CD8-positive, alpha-beta T cell (primary cell): ENCODE measurements at regions of chr15 and their contacts with region 1.

Region 1: DNA sequence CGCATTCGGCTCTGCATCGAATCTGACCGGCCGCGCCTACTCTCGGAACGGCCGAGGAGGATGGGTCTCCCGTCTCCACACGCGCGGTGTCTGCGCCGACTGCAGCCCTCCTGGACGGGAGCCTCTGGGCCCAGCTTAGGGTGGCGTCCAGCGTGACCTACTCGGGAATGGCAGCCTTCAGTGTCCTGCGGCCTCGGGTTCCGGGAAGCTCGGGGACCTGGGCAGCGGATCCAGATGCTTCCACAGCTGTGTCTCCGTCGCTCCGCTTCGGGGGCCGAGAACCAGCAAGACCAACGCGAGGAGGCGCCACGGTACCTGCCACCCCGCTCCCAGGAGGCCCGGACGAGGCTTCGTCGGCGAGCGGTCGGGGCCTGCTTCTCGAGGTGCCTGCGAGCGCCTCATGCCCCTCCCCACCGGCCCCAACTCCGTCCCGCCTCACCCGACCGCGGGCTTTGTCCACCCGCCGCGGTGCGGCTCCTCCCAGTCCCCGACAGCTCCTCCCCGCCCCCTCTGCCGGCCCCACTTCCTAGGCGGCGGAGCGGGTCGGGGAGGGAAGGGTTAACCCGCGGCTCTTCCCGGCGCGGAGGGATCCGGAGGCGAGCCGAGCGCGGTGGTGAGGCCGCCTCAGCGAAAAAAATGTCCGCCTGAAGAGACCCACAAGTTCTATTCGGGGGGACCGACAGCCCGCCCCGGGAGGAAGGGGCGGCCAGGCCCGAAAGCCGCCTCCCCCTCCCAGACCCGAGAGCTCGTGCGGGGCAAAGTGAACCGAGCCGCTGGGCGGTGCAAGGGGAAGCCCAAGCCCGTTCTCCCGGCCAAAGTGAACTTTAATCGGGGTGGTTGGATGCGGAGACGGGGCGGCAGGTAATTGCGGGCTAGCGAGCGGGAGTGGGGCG is at the start of gene TCF12:
- DNase-seq: peak; percentile 76 to 96 (median 88)
- ATAC-seq: peak; percentile 70
- H3K4me3 ChIP-seq: peak within 1 kb of the TSS; percentile 89 to 96
- H3K4me3 Mint-ChIP-seq: peak within 1 kb of the TSS; percentile 88
- H3K27ac ChIP-seq: peak within 1 kb of the TSS; percentile 64 to 84
- H3K27ac Mint-ChIP-seq: peak within 1 kb of the TSS; percentile 93
- H3K4me1 ChIP-seq: peaks cover 25% of the 10 kb centered on the region
- H3K4me1 Mint-ChIP-seq: peaks cover 46% of the 10 kb centered on the region
- H3K27me3 ChIP-seq: no peaks in the 10 kb centered on the region
- H3K27me3 Mint-ChIP-seq: no peaks in the 10 kb centered on the region
- CTCF ChIP-seq: peak; percentile 50
- total RNA-seq, gene TCF12: 45.0 to 47.2 TPM

Region 2: GRCh38 chr15:56886932-56887781 is 31.1 kb before region 1 on chr15:
- CTCF ChIA-PET with region 1: interaction called, 5 read pairs
- POLR2A ChIA-PET with region 1: interaction called, 34 read pairs
- intact Hi-C with region 1: loop called (anchors 1 kb)
- DNase-seq: peak; percentile 52 to 94 (median 77)
- ATAC-seq: peak; percentile 85
- H3K4me3 ChIP-seq: peak overlapping the region; percentile 77
- H3K4me3 Mint-ChIP-seq: peak overlapping the region; percentile 86
- H3K27ac ChIP-seq: peak overlapping the region; percentile 68 to 92
- H3K27ac Mint-ChIP-seq: peak overlapping the region; percentile 86
- H3K4me1 ChIP-seq: peaks cover 14% of the 10 kb centered on the region
- H3K4me1 Mint-ChIP-seq: peaks cover 31% of the 10 kb centered on the region
- H3K27me3 ChIP-seq: no peaks in the 10 kb centered on the region
- H3K27me3 Mint-ChIP-seq: no peaks in the 10 kb centered on the region
- CTCF ChIP-seq: no peak

Region 3: DNA sequence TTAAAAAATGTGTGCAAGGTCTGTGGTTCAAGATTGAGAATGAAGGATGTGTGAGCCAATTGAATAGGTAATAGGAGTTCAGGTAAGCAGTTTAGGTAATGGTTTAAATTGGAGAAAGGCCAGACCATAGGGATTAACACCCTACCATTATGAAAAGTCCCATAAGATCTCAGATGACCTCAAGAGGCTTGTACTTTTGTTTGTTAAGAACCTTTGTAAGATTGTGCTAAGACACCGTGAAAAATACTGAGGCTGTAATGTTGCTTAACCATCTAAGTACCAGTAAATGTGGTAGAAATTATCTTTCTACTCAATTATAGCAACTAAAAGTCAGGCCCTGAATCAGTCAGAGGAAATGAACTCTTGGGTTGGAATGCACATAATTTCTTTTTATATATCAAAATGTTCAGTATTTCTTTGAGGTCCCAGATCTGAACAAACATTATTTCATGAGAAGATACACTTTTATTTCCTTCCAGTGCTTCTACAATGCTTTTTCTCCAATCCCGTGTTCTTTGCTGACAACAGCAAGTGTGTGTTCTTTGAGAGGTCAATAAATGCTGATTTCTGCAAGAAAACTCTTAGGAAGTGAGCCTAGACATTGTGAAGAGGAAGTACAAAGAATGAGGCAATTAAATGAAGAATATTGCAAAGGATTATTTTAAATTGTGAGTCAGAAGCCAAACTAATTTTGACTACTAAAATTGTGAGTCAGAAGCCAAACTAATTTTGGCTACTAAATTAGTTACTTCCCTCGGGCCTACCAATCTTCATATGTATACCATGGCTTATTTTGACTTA is 66.6 kb after region 1 on chr15:
- CTCF ChIA-PET with region 1: no interaction called
- POLR2A ChIA-PET with region 1: no interaction called
- intact Hi-C with region 1: loop called in 1 of 2 experiments (anchors 5 kb)
- DNase-seq: no peak
- ATAC-seq: no peak
- H3K4me3 ChIP-seq: no peak overlapping the region
- H3K4me3 Mint-ChIP-seq: no peak overlapping the region
- H3K27ac ChIP-seq: no peak overlapping the region
- H3K27ac Mint-ChIP-seq: no peak overlapping the region
- H3K4me1 ChIP-seq: peaks cover 18% of the 10 kb centered on the region
- H3K4me1 Mint-ChIP-seq: peaks cover 70% of the 10 kb centered on the region
- H3K27me3 ChIP-seq: no peaks in the 10 kb centered on the region
- H3K27me3 Mint-ChIP-seq: no peaks in the 10 kb centered on the region
- CTCF ChIP-seq: no peak

Region 4: GRCh38 chr15:57031605-57032004 is 113.3 kb after region 1 on chr15:
- CTCF ChIA-PET with region 1: no interaction called
- POLR2A ChIA-PET with region 1: no interaction called
- intact Hi-C with region 1: no loop called
- DNase-seq: no peak
- ATAC-seq: no peak
- H3K4me3 ChIP-seq: no peak overlapping the region
- H3K4me3 Mint-ChIP-seq: no peak overlapping the region
- H3K27ac ChIP-seq: no peak overlapping the region
- H3K27ac Mint-ChIP-seq: no peak overlapping the region
- H3K4me1 ChIP-seq: peaks cover 18% of the 10 kb centered on the region
- H3K4me1 Mint-ChIP-seq: peaks cover 49% of the 10 kb centered on the region
- H3K27me3 ChIP-seq: no peaks in the 10 kb centered on the region
- H3K27me3 Mint-ChIP-seq: no peaks in the 10 kb centered on the region
- CTCF ChIP-seq: no peak

Region 5: DNA sequence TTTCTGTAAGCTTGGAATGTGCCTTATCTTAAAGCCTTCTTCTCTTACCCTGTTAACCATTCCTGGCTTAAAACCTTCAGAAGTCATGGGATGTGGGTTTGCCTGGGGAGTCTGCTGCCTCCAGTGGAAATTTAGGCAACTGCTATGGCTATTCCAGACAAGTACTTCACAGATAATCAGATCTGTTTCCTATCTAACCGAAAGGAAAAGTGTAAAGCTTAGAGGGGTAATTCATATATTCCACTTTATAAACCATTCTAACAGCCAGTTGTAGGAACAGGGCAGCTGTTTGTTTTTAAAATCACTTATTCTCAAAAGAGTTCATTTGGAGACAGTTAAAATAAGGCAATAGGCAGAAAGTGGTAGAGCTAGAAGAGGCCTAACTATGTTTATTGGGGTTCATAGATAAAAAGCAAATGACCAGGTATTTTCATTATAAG is 220.1 kb after region 1 on chr15:
- CTCF ChIA-PET with region 1: interaction called, 3 read pairs
- POLR2A ChIA-PET with region 1: no interaction called
- intact Hi-C with region 1: loop called in 1 of 2 experiments (anchors 5 kb)
- DNase-seq: peak in 1 of 9 experiments; percentile 26
- ATAC-seq: peak; percentile 48
- H3K4me3 ChIP-seq: no peak overlapping the region
- H3K4me3 Mint-ChIP-seq: no peak overlapping the region
- H3K27ac ChIP-seq: no peak overlapping the region
- H3K27ac Mint-ChIP-seq: peak overlapping the region; percentile 11
- H3K4me1 ChIP-seq: peaks cover 8% of the 10 kb centered on the region
- H3K4me1 Mint-ChIP-seq: peaks cover 25% of the 10 kb centered on the region
- H3K27me3 ChIP-seq: no peaks in the 10 kb centered on the region
- H3K27me3 Mint-ChIP-seq: no peaks in the 10 kb centered on the region
- CTCF ChIP-seq: peak; percentile 38

Region 6: DNA sequence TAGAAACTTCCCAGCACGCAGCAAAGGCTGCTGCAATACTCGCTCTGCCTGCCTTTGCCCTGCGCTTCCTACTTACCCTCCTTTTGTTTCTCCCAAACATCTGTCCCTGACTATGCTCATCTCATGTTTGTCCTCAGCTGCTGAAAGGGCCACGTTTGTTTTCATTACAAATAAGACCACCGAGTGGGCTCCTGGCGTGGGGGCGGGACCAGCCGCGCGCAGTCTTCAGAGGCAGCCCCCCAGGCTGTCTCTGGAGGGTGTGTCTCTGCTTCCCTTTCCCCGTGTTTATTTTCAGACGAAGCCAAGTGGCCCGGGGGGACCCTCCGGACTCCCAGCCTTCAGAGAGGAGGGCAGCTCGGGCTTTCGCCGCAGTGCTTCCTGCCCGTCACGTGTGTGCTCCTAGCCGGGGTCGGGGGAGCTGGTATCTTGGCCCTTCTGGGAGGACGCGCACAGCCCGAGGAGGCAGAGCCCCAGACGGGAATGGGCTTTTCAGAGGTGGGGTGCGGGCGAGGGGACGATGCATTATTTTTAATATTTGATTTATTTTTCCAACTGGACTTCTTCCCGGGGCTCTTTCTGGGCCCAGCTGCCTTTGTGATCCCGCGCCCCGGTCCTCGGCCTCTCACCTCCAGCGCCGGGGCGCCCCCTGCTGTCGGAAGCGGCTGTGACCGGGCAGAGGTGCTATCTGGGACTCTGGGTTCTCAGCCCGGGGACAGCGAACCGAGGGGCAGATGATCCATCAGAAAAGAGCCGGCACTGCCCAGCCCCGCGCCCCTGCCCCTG is 388.1 kb after region 1 on chr15:
- CTCF ChIA-PET with region 1: interaction called, 3 read pairs
- POLR2A ChIA-PET with region 1: no interaction called
- intact Hi-C with region 1: loop called (anchors 1 to 2 kb)
- DNase-seq: peak; percentile 64 to 90 (median 78)
- ATAC-seq: peak; percentile 75
- H3K4me3 ChIP-seq: peak overlapping the region; percentile 46 to 49
- H3K4me3 Mint-ChIP-seq: peak overlapping the region; percentile 67
- H3K27ac ChIP-seq: no peak overlapping the region
- H3K27ac Mint-ChIP-seq: no peak overlapping the region
- H3K4me1 ChIP-seq: no peaks in the 10 kb centered on the region
- H3K4me1 Mint-ChIP-seq: peaks cover 4% of the 10 kb centered on the region
- H3K27me3 ChIP-seq: peaks cover 0 to 4% of the 10 kb centered on the region in 2 experiments
- H3K27me3 Mint-ChIP-seq: peaks cover 9% of the 10 kb centered on the region
- CTCF ChIP-seq: peak; percentile 83